WTC11 (cell line): ENCODE measurements at regions of chr19 and their contacts with region 1.

Region 1: DNA sequence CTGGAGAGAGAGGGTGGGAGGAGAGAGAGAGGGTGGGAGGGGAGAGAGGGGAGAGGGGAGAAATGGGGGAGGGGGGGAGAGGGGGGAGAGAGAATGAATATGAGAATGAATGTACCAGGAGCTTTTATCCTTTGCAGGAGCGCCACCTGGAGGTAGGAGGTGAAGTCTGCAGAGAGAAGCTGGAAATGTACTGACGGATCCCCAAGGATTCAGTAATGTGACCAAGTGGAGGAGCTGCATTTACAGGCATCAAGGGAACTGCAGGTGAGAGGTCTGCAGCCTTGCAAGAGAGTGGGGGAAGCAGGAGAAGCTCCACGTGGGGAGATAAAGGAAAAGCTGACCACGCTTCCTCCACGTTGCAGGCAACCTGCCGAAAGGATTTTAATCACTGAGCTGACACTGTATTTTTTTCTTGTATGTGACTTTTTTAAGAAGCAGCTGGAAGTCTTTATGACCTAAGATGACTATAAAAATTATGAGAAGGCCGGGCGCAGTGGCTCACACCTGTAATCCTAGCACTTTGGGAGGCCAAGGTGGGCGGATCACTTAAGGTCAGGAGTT is 33.7 kb downstream of the VSTM1 start:
- DNase-seq: peak; percentile 86
- ATAC-seq: peak; percentile 90
- H3K4me3 Mint-ChIP-seq: no peak overlapping the region
- H3K27ac Mint-ChIP-seq: peak overlapping the region; percentile 75
- H3K4me1 Mint-ChIP-seq: peaks cover 36% of the 10 kb centered on the region
- H3K27me3 Mint-ChIP-seq: no peaks in the 10 kb centered on the region
- CTCF ChIP-seq: peak; percentile 79

Region 2: GRCh38 chr19:53867225-53868090 is 162.6 kb before region 1 on chr19 and contains the start of gene MYADM:
- CTCF ChIA-PET with region 1: interaction called, 31 read pairs
- POLR2A ChIA-PET with region 1: no interaction called
- DNase-seq: peak; percentile 100
- ATAC-seq: peak; percentile 71
- H3K4me3 Mint-ChIP-seq: peak within 1 kb of the TSS; percentile 93
- H3K27ac Mint-ChIP-seq: peak within 1 kb of the TSS; percentile 99
- H3K4me1 Mint-ChIP-seq: peaks cover 19% of the 10 kb centered on the region
- H3K27me3 Mint-ChIP-seq: peaks cover 5% of the 10 kb centered on the region
- CTCF ChIP-seq: no peak
- total RNA-seq, gene MYADM: 78.6 to 86.4 TPM (median 79.7 TPM) in 3 replicates

Region 3: DNA sequence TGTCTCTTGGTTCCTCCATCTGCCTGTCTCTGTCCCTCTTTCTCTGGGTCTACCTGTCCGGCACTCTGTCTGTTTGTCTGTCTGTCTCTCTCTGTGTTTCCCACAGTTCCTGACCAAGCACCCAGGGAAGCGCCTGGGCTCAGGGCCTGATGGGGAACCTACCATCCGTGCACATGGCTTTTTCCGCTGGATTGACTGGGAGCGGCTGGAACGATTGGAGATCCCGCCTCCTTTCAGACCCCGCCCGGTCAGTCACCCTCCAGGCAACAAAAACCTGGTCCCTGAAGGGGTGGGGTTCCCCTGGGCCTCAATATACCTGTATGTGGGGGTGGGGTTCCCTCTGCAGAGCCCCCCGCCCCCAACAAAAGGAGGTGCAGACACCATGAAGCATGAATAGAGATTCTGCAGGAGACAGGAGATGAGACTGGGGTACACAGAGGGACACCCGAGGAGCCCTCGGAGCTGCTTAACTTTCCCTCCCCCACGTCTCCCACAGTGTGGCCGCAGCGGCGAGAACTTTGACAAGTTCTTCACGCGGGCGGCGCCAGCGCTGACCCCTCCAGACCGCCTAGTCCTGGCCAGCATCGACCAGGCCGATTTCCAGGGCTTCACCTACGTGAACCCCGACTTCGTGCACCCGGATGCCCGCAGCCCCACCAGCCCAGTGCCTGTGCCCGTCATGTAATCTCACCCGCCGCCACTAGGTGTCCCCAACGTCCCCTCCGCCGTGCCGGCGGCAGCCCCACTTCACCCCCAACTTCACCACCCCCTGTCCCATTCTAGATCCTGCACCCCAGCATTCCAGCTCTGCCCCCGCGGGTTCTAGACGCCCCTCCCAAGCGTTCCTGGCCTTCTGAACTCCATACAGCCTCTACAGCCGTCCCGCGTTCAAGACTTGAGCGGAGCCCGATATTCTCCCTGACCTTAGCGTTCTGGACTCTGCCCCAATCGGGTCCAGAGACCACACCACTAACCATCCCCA is 123.5 kb before region 1 on chr19:
- CTCF ChIA-PET with region 1: interaction called, 35 read pairs
- POLR2A ChIA-PET with region 1: no interaction called
- DNase-seq: peak; percentile 89
- ATAC-seq: peak; percentile 15
- H3K4me3 Mint-ChIP-seq: peak overlapping the region; percentile 88
- H3K27ac Mint-ChIP-seq: no peak overlapping the region; the same call in 1 of the 2 replicates
- H3K4me1 Mint-ChIP-seq: peaks cover 34% of the 10 kb centered on the region
- H3K27me3 Mint-ChIP-seq: peaks cover 61% of the 10 kb centered on the region
- CTCF ChIP-seq: peak; percentile 98

Region 4: DNA sequence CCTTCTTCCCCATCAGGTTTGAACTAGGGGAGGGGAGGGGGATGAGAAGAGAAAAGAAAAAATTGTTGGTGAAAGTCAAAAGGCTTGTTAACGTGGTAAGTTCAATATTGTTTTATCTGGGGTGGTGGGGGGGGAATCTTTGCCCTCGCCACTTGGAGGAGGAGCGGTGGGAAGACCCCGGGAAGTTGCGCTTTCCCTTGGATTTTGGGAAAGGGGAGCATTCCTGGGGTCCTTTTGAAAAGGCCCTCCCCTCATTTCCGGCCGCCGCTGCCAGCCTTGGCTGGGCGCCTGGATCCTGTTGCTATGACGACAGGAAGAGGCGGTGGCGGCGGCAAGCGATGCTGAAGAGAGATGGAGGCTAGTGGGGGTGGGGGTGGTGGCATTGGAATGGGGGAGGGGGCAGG is 71.8 kb before region 1 on chr19:
- CTCF ChIA-PET with region 1: interaction called, 12 read pairs
- POLR2A ChIA-PET with region 1: interaction called, 3 read pairs
- DNase-seq: peak; percentile 85
- ATAC-seq: peak; percentile 27
- H3K4me3 Mint-ChIP-seq: peak overlapping the region; percentile 79
- H3K27ac Mint-ChIP-seq: peak overlapping the region; percentile 77
- H3K4me1 Mint-ChIP-seq: peaks cover 49% of the 10 kb centered on the region
- H3K27me3 Mint-ChIP-seq: no peaks in the 10 kb centered on the region; the same call in 1 of the 2 replicates
- CTCF ChIP-seq: no peak

Region 5: DNA sequence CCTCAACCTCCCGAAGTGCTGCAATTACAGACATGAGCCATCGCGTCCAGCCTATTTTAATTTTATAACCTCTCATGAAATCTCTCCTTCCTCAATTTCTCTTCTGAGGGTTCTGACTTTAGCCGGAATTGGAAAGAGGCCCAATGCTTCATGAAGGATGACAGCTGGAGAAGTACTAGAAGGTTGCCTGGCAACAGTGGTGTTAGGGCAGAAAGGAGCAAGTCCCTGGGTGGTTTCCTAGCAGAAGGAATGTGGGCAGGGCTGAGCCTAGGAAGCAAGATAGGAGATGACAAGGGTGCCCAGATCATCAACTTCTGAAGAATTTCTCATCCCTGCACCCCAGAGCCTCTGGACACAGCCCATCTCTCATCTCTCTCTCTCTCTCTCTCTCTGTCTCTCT is 12.7 kb before region 1 on chr19:
- CTCF ChIA-PET with region 1: interaction called, 43 read pairs
- POLR2A ChIA-PET with region 1: no interaction called
- DNase-seq: no peak
- ATAC-seq: no peak
- H3K4me3 Mint-ChIP-seq: no peak overlapping the region
- H3K27ac Mint-ChIP-seq: no peak overlapping the region
- H3K4me1 Mint-ChIP-seq: peaks cover 18% of the 10 kb centered on the region
- H3K27me3 Mint-ChIP-seq: peaks cover 30% of the 10 kb centered on the region
- CTCF ChIP-seq: no peak